ENCODE measurements at regions of chr22 and their contacts with region 1.

Region 1: DNA sequence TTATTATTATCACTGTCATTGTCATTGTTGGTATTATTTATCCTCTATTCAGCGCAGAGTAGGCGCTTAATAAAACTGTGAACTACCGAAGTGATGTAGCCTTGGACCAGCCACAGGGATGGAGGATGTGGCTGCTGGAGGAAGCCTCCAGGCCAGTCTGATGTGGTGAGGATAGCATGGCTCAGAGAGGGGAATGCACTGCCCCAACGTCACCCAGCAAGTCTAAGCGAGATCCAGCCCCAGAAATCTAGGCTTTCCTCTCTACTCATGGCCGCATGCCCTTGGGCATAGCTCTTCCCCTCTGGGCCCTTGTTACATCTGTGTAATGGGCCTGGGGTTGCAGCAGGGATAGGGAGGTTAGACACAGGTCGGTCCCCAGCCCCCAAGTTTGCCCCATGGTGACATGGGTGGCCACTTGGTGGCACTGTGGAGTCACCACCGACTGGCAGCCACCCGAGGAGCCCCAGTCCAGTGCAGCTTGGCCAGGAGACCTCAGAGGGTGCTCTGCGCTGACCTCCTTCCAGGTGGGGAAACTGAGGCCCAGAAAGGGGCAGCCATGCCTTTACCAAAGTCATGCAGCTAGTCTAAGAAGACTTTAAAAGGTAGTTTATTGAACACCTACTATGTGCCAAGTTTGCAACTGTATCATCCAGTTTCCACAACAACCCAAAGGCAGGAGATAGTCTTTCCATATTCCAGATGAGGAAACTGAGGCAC is 395.7 kb downstream of the MN1 start:
- DNase-seq: peak; percentile 18
- ATAC-seq: peak; percentile 99
- H3K4me3 ChIP-seq: no peak overlapping the region
- H3K27ac ChIP-seq: no peak overlapping the region
- H3K4me1 ChIP-seq: no peaks in the 10 kb centered on the region
- H3K27me3 ChIP-seq: peaks cover 5% of the 10 kb centered on the region
- CTCF ChIP-seq: peak; percentile 46 to 88 (median 80); a peak in 5 of 6 replicates
- POLR2A ChIP-seq: no peak
- RAD21 ChIP-seq: peak; percentile 72

Region 2: DNA sequence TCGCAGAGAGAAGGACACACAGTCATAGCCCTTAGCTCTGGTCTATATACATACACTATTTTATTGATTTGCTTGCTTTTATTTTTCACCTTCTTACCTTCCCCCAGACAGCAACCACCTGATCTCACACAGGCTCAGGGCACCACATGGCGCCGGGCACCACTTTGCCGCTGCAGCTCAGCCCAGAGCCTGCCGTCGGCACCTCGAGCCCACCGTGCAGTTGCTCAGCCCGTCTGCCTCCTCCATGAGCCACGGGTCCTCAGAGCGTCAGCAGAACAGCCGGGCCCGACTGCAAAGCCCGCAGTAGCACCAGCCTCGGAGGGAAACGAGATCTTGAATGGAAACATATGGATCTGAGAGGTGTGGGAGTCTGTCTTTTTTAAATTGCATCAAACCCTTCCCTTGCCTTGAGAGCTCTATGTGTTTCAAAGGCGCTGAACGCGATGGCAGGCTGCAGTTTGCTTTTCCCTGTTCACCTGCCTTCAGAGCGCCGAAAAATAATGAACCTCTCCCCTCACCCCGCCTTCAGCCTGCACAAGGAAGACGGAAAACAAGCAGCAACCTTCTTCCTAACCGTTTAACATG is 109.6 kb before region 1 on chr22:
- CTCF ChIA-PET with region 1: no interaction called
- POLR2A ChIA-PET with region 1: no interaction called
- RAD21 ChIA-PET with region 1: no interaction called
- intact Hi-C with region 1: no loop called
- DNase-seq: no peak
- ATAC-seq: no peak
- H3K4me3 ChIP-seq: no peak overlapping the region
- H3K27ac ChIP-seq: no peak overlapping the region
- H3K4me1 ChIP-seq: no peaks in the 10 kb centered on the region
- H3K27me3 ChIP-seq: peaks cover 73% of the 10 kb centered on the region
- CTCF ChIP-seq: no peak
- POLR2A ChIP-seq: no peak
- RAD21 ChIP-seq: no peak

Region 3: DNA sequence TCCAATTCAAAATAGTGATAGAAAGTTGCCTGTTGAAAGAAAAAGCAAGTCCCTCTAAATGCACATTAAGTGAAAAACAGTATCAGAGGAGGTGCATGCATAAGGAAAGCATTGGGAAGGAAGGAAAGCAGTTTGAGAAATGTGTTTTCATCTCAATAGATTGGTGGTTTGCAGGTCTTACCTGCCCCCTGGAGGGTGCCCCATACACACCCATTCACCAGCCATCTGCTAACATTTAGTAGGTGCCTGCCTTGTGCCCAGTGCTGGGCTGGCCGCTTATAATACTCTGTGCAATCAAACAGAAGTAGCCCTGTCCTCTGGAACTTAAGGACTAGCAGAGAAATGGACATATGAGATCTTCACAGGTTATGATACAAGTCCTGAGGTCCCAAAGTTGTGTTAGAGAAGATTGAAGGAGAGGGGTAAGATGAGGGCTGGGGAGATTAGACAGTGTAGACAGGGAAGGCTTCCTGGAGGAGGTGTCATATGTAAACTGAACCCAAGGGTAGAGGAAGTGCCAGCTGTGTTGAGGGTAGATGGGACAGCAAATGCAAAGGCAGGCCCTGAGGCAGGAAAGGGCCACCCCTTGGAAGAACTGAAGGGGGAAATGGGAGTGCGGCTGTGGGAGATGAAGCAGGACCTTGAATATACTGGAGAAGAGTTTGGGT is 211.5 kb after region 1 on chr22:
- CTCF ChIA-PET with region 1: no interaction called
- POLR2A ChIA-PET with region 1: no interaction called
- RAD21 ChIA-PET with region 1: no interaction called
- intact Hi-C with region 1: loop called (anchors 5 kb)
- DNase-seq: no peak
- ATAC-seq: no peak; the same call in 1 of the 2 replicates
- H3K4me3 ChIP-seq: no peak overlapping the region
- H3K27ac ChIP-seq: no peak overlapping the region
- H3K4me1 ChIP-seq: peaks cover 0 to 4% of the 10 kb centered on the region in 2 experiments; a peak in 1 of 4 replicates
- H3K27me3 ChIP-seq: 0 out of 2 replicates have a peak, but pooled peaks cover 6% of the 10 kb centered on the region
- CTCF ChIP-seq: peak in 2 of 3 experiments; percentile 1 to 22; a peak in 1 of 6 replicates
- POLR2A ChIP-seq: no peak
- RAD21 ChIP-seq: peak; percentile 46

Region 4: GRCh38 chr22:27668828-27669797 is 263.3 kb after region 1 on chr22:
- CTCF ChIA-PET with region 1: no interaction called
- POLR2A ChIA-PET with region 1: no interaction called
- RAD21 ChIA-PET with region 1: no interaction called
- intact Hi-C with region 1: loop called (anchors 5 kb)
- DNase-seq: peak; percentile 58
- ATAC-seq: peak; percentile 84
- H3K4me3 ChIP-seq: peak overlapping the region in 1 of 2 experiments; percentile 23; a peak in 1 of 4 replicates
- H3K27ac ChIP-seq: peak overlapping the region; percentile 50; the same call in 1 of the 2 replicates
- H3K4me1 ChIP-seq: peaks cover 27 to 35% of the 10 kb centered on the region in 2 experiments
- H3K27me3 ChIP-seq: no peaks in the 10 kb centered on the region
- CTCF ChIP-seq: no peak
- POLR2A ChIP-seq: no peak
- RAD21 ChIP-seq: peak; percentile 6; the same call in 1 of the 2 replicates

Region 5: GRCh38 chr22:27804470-27805297 is 398.9 kb after region 1 on chr22:
- CTCF ChIA-PET with region 1: no interaction called
- POLR2A ChIA-PET with region 1: no interaction called
- RAD21 ChIA-PET with region 1: no interaction called
- intact Hi-C with region 1: loop called (anchors 2 kb)
- DNase-seq: no peak
- ATAC-seq: peak; percentile 78
- H3K4me3 ChIP-seq: no peak overlapping the region
- H3K27ac ChIP-seq: no peak overlapping the region
- H3K4me1 ChIP-seq: peaks cover 6 to 19% of the 10 kb centered on the region in 2 experiments; a peak in 2 of 4 replicates
- H3K27me3 ChIP-seq: no peaks in the 10 kb centered on the region
- CTCF ChIP-seq: peak; percentile 50 to 80 (median 76); a peak in 5 of 6 replicates
- POLR2A ChIP-seq: no peak
- RAD21 ChIP-seq: peak; percentile 84

Region 6: GRCh38 chr22:28009272-28009827 is 603.5 kb after region 1 on chr22:
- CTCF ChIA-PET with region 1: no interaction called
- POLR2A ChIA-PET with region 1: no interaction called
- RAD21 ChIA-PET with region 1: no interaction called
- intact Hi-C with region 1: loop called (anchors 2 kb)
- DNase-seq: peak; percentile 49
- ATAC-seq: peak; percentile 96
- H3K4me3 ChIP-seq: no peak overlapping the region
- H3K27ac ChIP-seq: no peak overlapping the region
- H3K4me1 ChIP-seq: no peaks in the 10 kb centered on the region
- H3K27me3 ChIP-seq: no peaks in the 10 kb centered on the region
- CTCF ChIP-seq: peak; percentile 69 to 99 (median 93)
- POLR2A ChIP-seq: no peak
- RAD21 ChIP-seq: peak; percentile 89